CD8-positive, alpha-beta T cell (primary cell): ENCODE measurements at regions of chr1 and their contacts with region 1.

Region 1: GRCh38 chr1:31422505-31423319 is 9.7 kb downstream of the SERINC2 start:
- DNase-seq: peak; percentile 27 to 78 (median 67)
- ATAC-seq: peak; percentile 77
- H3K4me3 ChIP-seq: no peak overlapping the region
- H3K4me3 Mint-ChIP-seq: no peak overlapping the region
- H3K27ac ChIP-seq: no peak overlapping the region
- H3K27ac Mint-ChIP-seq: no peak overlapping the region
- H3K4me1 ChIP-seq: no peaks in the 10 kb centered on the region
- H3K4me1 Mint-ChIP-seq: no peaks in the 10 kb centered on the region
- H3K27me3 ChIP-seq: no peaks in the 10 kb centered on the region
- H3K27me3 Mint-ChIP-seq: peaks cover 24% of the 10 kb centered on the region
- CTCF ChIP-seq: peak; percentile 86

Region 2: DNA sequence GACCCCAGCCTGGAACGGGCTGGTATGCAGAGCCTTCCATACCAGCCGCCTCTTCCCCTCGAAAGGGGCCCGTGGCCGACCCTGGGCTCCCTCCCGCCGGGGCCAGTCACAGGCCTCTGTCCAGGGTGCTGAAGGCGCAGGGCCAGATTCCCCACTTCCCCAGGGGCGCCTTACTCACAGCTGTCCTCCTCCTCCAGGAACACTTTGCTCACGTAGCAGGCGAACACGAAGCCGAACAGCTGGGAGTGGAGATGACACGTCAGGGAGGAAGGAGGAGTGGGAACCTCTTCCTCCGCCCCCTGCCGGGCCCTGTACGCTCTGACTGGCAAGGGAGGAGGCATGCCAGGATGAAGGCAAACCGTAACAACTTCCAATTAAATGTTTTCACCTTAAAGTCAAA is 240.4 kb before region 1 on chr1:
- CTCF ChIA-PET with region 1: interaction called, 5 read pairs
- POLR2A ChIA-PET with region 1: no interaction called
- intact Hi-C with region 1: loop called in 1 of 2 experiments (anchors 2 kb)
- DNase-seq: peak; percentile 9 to 69 (median 45)
- ATAC-seq: peak; percentile 56
- H3K4me3 ChIP-seq: no peak overlapping the region
- H3K4me3 Mint-ChIP-seq: peak overlapping the region; percentile 15
- H3K27ac ChIP-seq: no peak overlapping the region
- H3K27ac Mint-ChIP-seq: no peak overlapping the region
- H3K4me1 ChIP-seq: peaks cover 7% of the 10 kb centered on the region
- H3K4me1 Mint-ChIP-seq: peaks cover 8% of the 10 kb centered on the region
- H3K27me3 ChIP-seq: peaks cover 11 to 14% of the 10 kb centered on the region in 2 experiments
- H3K27me3 Mint-ChIP-seq: peaks cover 57% of the 10 kb centered on the region
- CTCF ChIP-seq: no peak

Region 3: GRCh38 chr1:31372961-31373896 is 49.5 kb before region 1 on chr1 and contains the start of gene FABP3:
- CTCF ChIA-PET with region 1: interaction called, 10 read pairs
- POLR2A ChIA-PET with region 1: no interaction called
- intact Hi-C with region 1: no loop called
- DNase-seq: peak in 6 of 9 experiments; percentile 13 to 50 (median 20)
- ATAC-seq: peak; percentile 48
- H3K4me3 ChIP-seq: peak within 1 kb of the TSS; percentile 43 to 60
- H3K4me3 Mint-ChIP-seq: peak within 1 kb of the TSS; percentile 91
- H3K27ac ChIP-seq: no peak within 1 kb of the TSS
- H3K27ac Mint-ChIP-seq: no peak within 1 kb of the TSS
- H3K4me1 ChIP-seq: peaks cover 9% of the 10 kb centered on the region
- H3K4me1 Mint-ChIP-seq: peaks cover 11% of the 10 kb centered on the region
- H3K27me3 ChIP-seq: no peaks in the 10 kb centered on the region
- H3K27me3 Mint-ChIP-seq: no peaks in the 10 kb centered on the region
- CTCF ChIP-seq: no peak
- total RNA-seq, gene FABP3: not detected

Region 4: GRCh38 chr1:31394628-31395193 is 28.0 kb before region 1 on chr1:
- CTCF ChIA-PET with region 1: interaction called, 59 read pairs
- POLR2A ChIA-PET with region 1: no interaction called
- intact Hi-C with region 1: loop called (anchors 1 kb)
- DNase-seq: peak; percentile 58 to 86 (median 78)
- ATAC-seq: peak; percentile 94
- H3K4me3 ChIP-seq: peak overlapping the region; percentile 64 to 78
- H3K4me3 Mint-ChIP-seq: peak overlapping the region; percentile 86
- H3K27ac ChIP-seq: no peak overlapping the region
- H3K27ac Mint-ChIP-seq: no peak overlapping the region
- H3K4me1 ChIP-seq: peaks cover 8% of the 10 kb centered on the region
- H3K4me1 Mint-ChIP-seq: peaks cover 12% of the 10 kb centered on the region
- H3K27me3 ChIP-seq: no peaks in the 10 kb centered on the region
- H3K27me3 Mint-ChIP-seq: no peaks in the 10 kb centered on the region
- CTCF ChIP-seq: peak; percentile 70